WTC11 (cell line): ENCODE measurements at regions of chr20 and their contacts with region 1.

Region 1: DNA sequence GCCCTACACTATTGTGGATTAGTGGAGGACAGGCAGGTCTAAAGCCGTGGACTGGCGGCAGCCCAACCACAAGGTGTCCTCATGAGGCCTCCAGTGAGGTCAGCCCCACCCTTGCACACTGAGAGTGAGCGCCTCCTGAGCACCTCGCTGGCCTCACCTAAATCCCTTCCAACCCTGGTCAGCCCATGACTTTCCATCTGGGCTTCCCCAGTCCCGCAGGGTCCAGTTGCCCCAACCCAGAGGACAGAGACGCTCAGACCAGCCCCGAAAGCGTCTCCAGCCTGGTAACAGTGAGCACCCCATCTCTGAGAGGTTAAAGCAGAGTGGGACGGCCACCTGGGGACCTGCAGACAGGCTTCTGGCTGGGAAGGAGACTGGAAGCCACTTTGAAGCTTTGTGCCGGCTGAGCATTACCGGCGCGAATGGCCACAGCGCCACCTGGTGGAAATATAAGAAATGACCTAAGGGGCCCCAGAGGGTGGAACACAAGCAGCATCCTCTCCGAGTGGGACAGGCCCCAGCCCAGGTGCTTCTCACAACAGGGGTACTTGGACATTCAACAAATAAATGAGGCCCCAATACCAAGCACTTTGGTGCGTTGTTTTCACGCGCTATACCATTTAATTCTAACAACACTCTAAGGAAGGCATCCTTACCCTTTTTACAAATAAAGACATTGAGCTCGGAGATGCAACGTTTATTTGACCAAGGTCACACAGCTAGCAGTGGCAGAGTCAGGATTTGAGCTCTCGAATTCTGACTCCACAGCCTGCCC is 65.7 kb upstream of the TOP1 start:
- DNase-seq: peak; percentile 81
- ATAC-seq: peak; percentile 88
- H3K4me3 Mint-ChIP-seq: no peak overlapping the region
- H3K27ac Mint-ChIP-seq: no peak overlapping the region
- H3K4me1 Mint-ChIP-seq: 0 out of 2 replicates have a peak, but pooled peaks cover 2% of the 10 kb centered on the region
- H3K27me3 Mint-ChIP-seq: no peaks in the 10 kb centered on the region
- CTCF ChIP-seq: peak; percentile 96

Region 2: GRCh38 chr20:40668449-40669228 is 294.3 kb before region 1 on chr20:
- CTCF ChIA-PET with region 1: no interaction called
- POLR2A ChIA-PET with region 1: no interaction called
- DNase-seq: no peak
- ATAC-seq: no peak
- H3K4me3 Mint-ChIP-seq: no peak overlapping the region
- H3K27ac Mint-ChIP-seq: no peak overlapping the region
- H3K4me1 Mint-ChIP-seq: peaks cover 17% of the 10 kb centered on the region
- H3K27me3 Mint-ChIP-seq: 0 out of 2 replicates have a peak, but pooled peaks cover 1% of the 10 kb centered on the region
- CTCF ChIP-seq: no peak

Region 3: DNA sequence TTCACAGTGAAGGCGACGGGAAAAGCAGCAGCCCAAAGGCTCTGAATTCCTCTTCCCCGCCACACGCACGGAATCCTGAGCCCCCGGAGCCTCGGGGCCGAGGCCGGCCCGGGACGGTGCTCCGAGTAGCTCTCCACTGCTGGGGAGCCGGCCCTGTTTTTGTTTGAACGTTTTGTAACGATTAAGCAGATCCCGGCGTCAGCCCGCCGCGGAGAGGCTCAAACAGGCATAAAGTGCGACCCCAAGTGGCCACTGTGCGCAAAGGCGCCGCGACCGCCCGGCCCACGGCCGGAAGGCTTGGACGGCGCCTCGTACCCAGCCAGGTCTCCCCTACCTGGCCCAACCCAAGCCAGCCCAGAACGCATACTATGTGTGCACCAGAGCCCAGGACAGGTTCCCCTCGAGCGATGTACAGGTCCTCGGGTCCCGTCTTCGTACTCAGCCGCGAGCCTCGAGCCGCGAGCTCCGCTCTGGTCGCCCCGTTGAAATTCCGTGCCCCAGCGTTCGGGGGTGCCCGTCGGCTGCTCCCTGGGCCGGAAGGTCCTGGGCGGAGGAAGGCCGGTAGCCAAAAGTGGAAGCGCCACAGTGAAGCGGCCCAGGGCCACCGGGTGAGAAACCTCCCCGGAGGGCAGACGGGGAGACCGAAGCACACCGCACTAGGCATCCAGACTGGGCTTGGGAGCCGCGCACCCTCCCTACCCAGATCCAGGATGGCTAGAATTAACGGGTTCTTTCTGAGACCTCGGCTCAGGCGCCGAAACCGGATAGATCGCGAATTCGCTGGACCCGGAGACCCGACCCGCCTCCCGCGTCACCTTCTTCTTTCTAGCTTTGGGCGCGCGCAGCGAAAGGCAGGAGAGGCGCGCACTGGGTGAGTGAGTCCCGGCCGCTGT is 272.7 kb before region 1 on chr20:
- CTCF ChIA-PET with region 1: interaction called, 21 read pairs
- POLR2A ChIA-PET with region 1: no interaction called
- DNase-seq: peak; percentile 95
- ATAC-seq: peak; percentile 55
- H3K4me3 Mint-ChIP-seq: peak overlapping the region; percentile 78
- H3K27ac Mint-ChIP-seq: no peak overlapping the region
- H3K4me1 Mint-ChIP-seq: peaks cover 41% of the 10 kb centered on the region
- H3K27me3 Mint-ChIP-seq: peaks cover 96% of the 10 kb centered on the region
- CTCF ChIP-seq: peak; percentile 87

Region 4: GRCh38 chr20:40741507-40742106 is 221.3 kb before region 1 on chr20:
- CTCF ChIA-PET with region 1: interaction called, 51 read pairs
- POLR2A ChIA-PET with region 1: no interaction called
- DNase-seq: peak; percentile 66
- ATAC-seq: peak; percentile 78
- H3K4me3 Mint-ChIP-seq: no peak overlapping the region
- H3K27ac Mint-ChIP-seq: no peak overlapping the region
- H3K4me1 Mint-ChIP-seq: peaks cover 31% of the 10 kb centered on the region
- H3K27me3 Mint-ChIP-seq: no peaks in the 10 kb centered on the region
- CTCF ChIP-seq: peak; percentile 46; the same call in 1 of the 2 replicates

Region 5: DNA sequence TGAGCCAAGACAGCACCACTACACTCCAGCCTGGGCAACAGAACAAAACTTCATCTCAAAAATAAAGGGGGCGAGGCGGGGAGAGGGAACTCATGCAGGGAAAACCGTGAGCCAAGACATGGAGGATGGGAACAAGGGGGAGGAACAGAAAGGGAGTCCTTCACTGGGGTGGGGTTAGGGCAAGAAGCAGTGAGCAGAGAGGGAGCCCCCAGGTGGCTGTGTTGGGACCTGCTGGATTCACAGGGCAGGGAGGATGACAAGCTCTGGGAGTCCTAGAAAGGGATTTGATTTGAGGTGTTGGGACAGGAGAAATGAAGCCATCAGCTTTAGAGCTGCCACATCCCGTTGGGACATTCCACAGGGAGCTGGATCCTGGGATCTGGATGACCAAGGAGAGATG is 24.9 kb before region 1 on chr20:
- CTCF ChIA-PET with region 1: interaction called, 14 read pairs
- POLR2A ChIA-PET with region 1: no interaction called
- DNase-seq: peak; percentile 56
- ATAC-seq: peak; percentile 94
- H3K4me3 Mint-ChIP-seq: no peak overlapping the region
- H3K27ac Mint-ChIP-seq: no peak overlapping the region
- H3K4me1 Mint-ChIP-seq: no peaks in the 10 kb centered on the region
- H3K27me3 Mint-ChIP-seq: peaks cover 3% of the 10 kb centered on the region; the same call in 1 of the 2 replicates
- CTCF ChIP-seq: no peak

Region 6: GRCh38 chr20:41078329-41078728 is 115.4 kb after region 1 on chr20:
- CTCF ChIA-PET with region 1: interaction called, 10 read pairs
- POLR2A ChIA-PET with region 1: no interaction called
- DNase-seq: no peak
- ATAC-seq: peak; percentile 32; the same call in 1 of the 2 replicates
- H3K4me3 Mint-ChIP-seq: no peak overlapping the region
- H3K27ac Mint-ChIP-seq: no peak overlapping the region
- H3K4me1 Mint-ChIP-seq: peaks cover 6% of the 10 kb centered on the region; the same call in 1 of the 2 replicates
- H3K27me3 Mint-ChIP-seq: no peaks in the 10 kb centered on the region
- CTCF ChIP-seq: no peak